IMR-90 (cell line): ENCODE measurements at regions of chr22 and their contacts with region 1.

Region 1: GRCh38 chr22:35894937-35895708 is 133.5 kb downstream of the RBFOX2 start:
- DNase-seq: peak; percentile 79
- ATAC-seq: peak; percentile 93
- H3K4me3 ChIP-seq: no peak overlapping the region
- H3K27ac ChIP-seq: peak overlapping the region; percentile 43; the same call in 1 of the 2 replicates
- H3K4me1 ChIP-seq: peaks cover 21% of the 10 kb centered on the region
- H3K27me3 ChIP-seq: no peaks in the 10 kb centered on the region
- CTCF ChIP-seq: no peak
- POLR2A ChIP-seq: no peak
- RAD21 ChIP-seq: no peak

Region 2: GRCh38 chr22:35840302-35840739 is 54.8 kb before region 1 on chr22:
- CTCF ChIA-PET with region 1: no interaction called
- POLR2A ChIA-PET with region 1: no interaction called
- dilution Hi-C with region 1: no loop called
- in situ Hi-C with region 1: no loop called
- intact Hi-C with region 1: no loop called
- DNase-seq: peak; percentile 98
- ATAC-seq: peak; percentile 87
- H3K4me3 ChIP-seq: peak overlapping the region; percentile 77
- H3K27ac ChIP-seq: peak overlapping the region; percentile 86
- H3K4me1 ChIP-seq: peaks cover 6% of the 10 kb centered on the region
- H3K27me3 ChIP-seq: no peaks in the 10 kb centered on the region
- CTCF ChIP-seq: no peak
- POLR2A ChIP-seq: peak; percentile 48; the same call in 1 of the 2 replicates
- RAD21 ChIP-seq: no peak

Region 3: DNA sequence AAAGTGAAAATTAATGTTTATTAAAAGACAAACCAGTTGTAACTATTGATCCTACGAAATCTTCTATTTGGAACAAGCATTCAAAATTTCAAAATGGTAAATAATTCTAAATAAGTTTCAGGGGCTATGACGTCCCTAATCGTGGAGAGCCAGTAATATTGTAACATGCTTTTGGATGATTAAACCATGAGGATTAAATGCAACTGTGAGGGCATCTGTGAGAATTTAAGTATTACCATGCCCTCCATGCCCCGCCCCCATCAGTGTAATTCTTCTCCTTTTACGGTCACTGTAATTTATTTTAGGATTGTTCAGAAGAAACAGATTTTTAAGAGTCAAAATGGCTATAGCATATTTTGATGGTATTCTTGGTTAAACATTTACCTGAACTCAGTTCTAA is 44.3 kb before region 1 on chr22:
- CTCF ChIA-PET with region 1: no interaction called
- POLR2A ChIA-PET with region 1: no interaction called
- dilution Hi-C with region 1: no loop called
- in situ Hi-C with region 1: no loop called
- intact Hi-C with region 1: loop called (anchors 5 kb)
- DNase-seq: no peak
- ATAC-seq: no peak
- H3K4me3 ChIP-seq: no peak overlapping the region
- H3K27ac ChIP-seq: no peak overlapping the region
- H3K4me1 ChIP-seq: no peaks in the 10 kb centered on the region; the same call in 1 of the 2 replicates
- H3K27me3 ChIP-seq: no peaks in the 10 kb centered on the region
- CTCF ChIP-seq: no peak
- POLR2A ChIP-seq: no peak
- RAD21 ChIP-seq: no peak